ENCODE measurements at regions of chr9 and their contacts with region 1.

Region 1: GRCh38 chr9:89278997-89279739 is 31.8 kb upstream of the CKS2 start:
- DNase-seq: peak; percentile 36
- ATAC-seq: peak; percentile 67
- H3K4me3 ChIP-seq: no peak overlapping the region
- H3K27ac ChIP-seq: no peak overlapping the region
- H3K4me1 ChIP-seq: no peaks in the 10 kb centered on the region
- H3K27me3 ChIP-seq: no peaks in the 10 kb centered on the region
- CTCF ChIP-seq: peak; percentile 50 to 74 (median 67); a peak in 5 of 6 replicates
- POLR2A ChIP-seq: no peak
- RAD21 ChIP-seq: peak; percentile 78

Region 2: GRCh38 chr9:88593537-88594185 is 685.5 kb before region 1 on chr9:
- CTCF ChIA-PET with region 1: interaction called, 8 read pairs
- POLR2A ChIA-PET with region 1: no interaction called
- RAD21 ChIA-PET with region 1: no interaction called
- intact Hi-C with region 1: loop called (anchors 5 kb)
- DNase-seq: peak; percentile 34
- ATAC-seq: peak; percentile 81
- H3K4me3 ChIP-seq: no peak overlapping the region
- H3K27ac ChIP-seq: no peak overlapping the region
- H3K4me1 ChIP-seq: no peaks in the 10 kb centered on the region
- H3K27me3 ChIP-seq: no peaks in the 10 kb centered on the region; the same call in 1 of the 2 replicates
- CTCF ChIP-seq: peak; percentile 67 to 82 (median 79)
- POLR2A ChIP-seq: no peak
- RAD21 ChIP-seq: peak; percentile 81

Region 3: GRCh38 chr9:88722753-88723152 is 556.4 kb before region 1 on chr9:
- CTCF ChIA-PET with region 1: no interaction called
- POLR2A ChIA-PET with region 1: no interaction called
- RAD21 ChIA-PET with region 1: no interaction called
- intact Hi-C with region 1: loop called (anchors 10 kb)
- DNase-seq: no peak
- ATAC-seq: peak; percentile 64
- H3K4me3 ChIP-seq: no peak overlapping the region
- H3K27ac ChIP-seq: no peak overlapping the region
- H3K4me1 ChIP-seq: no peaks in the 10 kb centered on the region
- H3K27me3 ChIP-seq: no peaks in the 10 kb centered on the region; the same call in none of the 2 replicates
- CTCF ChIP-seq: peak; percentile 15 to 41 (median 40); a peak in 4 of 6 replicates
- POLR2A ChIP-seq: no peak
- RAD21 ChIP-seq: peak; percentile 37

Region 4: GRCh38 chr9:89038382-89039103 is 240.6 kb before region 1 on chr9:
- CTCF ChIA-PET with region 1: no interaction called
- POLR2A ChIA-PET with region 1: no interaction called
- RAD21 ChIA-PET with region 1: no interaction called
- intact Hi-C with region 1: loop called (anchors 10 kb)
- DNase-seq: no peak
- ATAC-seq: no peak
- H3K4me3 ChIP-seq: no peak overlapping the region
- H3K27ac ChIP-seq: no peak overlapping the region
- H3K4me1 ChIP-seq: no peaks in the 10 kb centered on the region
- H3K27me3 ChIP-seq: no peaks in the 10 kb centered on the region; the same call in 1 of the 2 replicates
- CTCF ChIP-seq: no peak
- POLR2A ChIP-seq: no peak
- RAD21 ChIP-seq: no peak

Region 5: DNA sequence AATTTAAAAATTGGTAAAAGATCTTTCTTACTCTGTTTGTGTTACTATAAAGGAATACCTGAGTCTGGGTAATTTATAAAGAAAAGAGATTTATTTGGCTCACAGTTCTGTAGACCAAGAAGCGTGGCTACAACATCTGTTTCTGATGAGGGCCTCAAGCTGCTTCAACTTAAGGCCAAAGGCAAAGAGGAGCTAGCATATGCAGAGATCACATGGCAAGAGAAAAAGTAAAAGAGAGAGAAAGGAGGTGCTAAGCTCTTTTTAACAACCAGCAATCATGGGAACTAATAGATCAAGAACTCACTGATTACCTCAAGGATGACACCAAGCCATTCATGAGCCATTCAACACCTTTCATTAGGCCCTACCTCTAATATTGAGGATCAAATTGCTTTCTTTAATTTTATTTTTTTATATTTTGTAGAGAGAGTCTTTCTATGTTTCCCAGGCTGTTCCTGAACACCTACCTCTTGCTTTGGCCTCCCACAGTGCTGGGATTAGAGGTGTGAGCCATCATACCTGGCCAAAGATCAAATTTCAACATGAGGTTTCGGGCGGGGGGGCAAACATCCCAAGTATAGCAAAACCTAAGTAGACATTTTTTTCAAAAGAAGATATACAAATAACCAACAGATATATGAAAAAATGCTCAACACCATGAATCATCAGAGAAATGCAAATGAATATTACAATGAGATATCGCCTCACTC is 84.6 kb before region 1 on chr9:
- CTCF ChIA-PET with region 1: no interaction called
- POLR2A ChIA-PET with region 1: no interaction called
- RAD21 ChIA-PET with region 1: no interaction called
- intact Hi-C with region 1: loop called (anchors 5 kb)
- DNase-seq: no peak
- ATAC-seq: no peak
- H3K4me3 ChIP-seq: no peak overlapping the region
- H3K27ac ChIP-seq: no peak overlapping the region
- H3K4me1 ChIP-seq: no peaks in the 10 kb centered on the region
- H3K27me3 ChIP-seq: no peaks in the 10 kb centered on the region
- CTCF ChIP-seq: no peak
- POLR2A ChIP-seq: no peak
- RAD21 ChIP-seq: no peak

Region 6: DNA sequence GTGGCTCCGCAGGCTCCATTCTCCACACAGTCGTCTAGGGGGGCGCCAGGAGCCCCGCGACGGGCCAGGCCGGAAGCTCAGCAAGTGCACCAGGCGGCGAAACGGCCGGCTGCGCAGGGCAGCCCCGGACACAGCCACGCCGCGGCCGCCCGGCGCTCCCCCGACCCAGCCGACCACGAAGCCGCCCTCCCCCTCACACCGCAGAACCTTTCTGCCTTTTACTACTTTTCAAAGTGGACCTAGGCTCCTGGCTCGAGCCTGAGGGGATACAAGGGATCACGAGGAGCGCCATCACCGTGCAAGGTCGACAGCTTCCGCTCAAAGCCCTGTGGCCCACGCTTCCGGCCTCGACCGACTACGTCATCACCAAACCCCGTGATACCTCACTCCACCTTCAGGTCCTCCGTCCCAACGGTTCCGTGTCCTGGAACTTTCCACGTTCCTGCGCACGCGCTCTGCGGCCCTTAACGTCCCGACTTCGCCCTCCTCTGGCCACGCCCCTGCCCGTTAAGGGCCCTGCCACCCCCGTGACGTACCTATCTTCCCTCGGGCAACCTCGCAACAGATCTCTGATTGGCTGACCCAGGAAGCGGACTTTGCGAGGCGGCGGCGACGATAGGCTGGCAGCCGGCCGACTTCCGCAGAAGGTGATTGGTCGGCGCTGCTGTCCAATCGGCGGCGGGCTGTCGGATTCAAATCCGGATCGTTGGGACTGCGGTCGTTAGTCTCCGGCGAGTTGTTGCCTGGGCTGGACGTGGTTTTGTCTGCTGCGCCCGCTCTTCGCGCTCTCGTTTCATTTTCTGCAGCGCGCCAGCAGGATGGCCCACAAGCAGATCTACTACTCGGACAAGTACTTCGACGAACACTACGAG is 31.5 kb after region 1 on chr9 and contains the start of gene CKS2:
- CTCF ChIA-PET with region 1: no interaction called
- POLR2A ChIA-PET with region 1: no interaction called
- RAD21 ChIA-PET with region 1: no interaction called
- intact Hi-C with region 1: no loop called
- DNase-seq: peak; percentile 100
- ATAC-seq: peak; percentile 85
- H3K4me3 ChIP-seq: peak within 1 kb of the TSS; percentile 94 to 95
- H3K27ac ChIP-seq: peak within 1 kb of the TSS; percentile 94
- H3K4me1 ChIP-seq: peaks cover 15 to 40% of the 10 kb centered on the region in 2 experiments
- H3K27me3 ChIP-seq: no peaks in the 10 kb centered on the region
- CTCF ChIP-seq: no peak
- POLR2A ChIP-seq: peak; percentile 96
- RAD21 ChIP-seq: no peak
- total RNA-seq, gene CKS2: 242 TPM

Measured in HCT116 (cell line).